AG04450 (cell line): ENCODE measurements at regions of chr12 and their contacts with region 1.

Region 1: DNA sequence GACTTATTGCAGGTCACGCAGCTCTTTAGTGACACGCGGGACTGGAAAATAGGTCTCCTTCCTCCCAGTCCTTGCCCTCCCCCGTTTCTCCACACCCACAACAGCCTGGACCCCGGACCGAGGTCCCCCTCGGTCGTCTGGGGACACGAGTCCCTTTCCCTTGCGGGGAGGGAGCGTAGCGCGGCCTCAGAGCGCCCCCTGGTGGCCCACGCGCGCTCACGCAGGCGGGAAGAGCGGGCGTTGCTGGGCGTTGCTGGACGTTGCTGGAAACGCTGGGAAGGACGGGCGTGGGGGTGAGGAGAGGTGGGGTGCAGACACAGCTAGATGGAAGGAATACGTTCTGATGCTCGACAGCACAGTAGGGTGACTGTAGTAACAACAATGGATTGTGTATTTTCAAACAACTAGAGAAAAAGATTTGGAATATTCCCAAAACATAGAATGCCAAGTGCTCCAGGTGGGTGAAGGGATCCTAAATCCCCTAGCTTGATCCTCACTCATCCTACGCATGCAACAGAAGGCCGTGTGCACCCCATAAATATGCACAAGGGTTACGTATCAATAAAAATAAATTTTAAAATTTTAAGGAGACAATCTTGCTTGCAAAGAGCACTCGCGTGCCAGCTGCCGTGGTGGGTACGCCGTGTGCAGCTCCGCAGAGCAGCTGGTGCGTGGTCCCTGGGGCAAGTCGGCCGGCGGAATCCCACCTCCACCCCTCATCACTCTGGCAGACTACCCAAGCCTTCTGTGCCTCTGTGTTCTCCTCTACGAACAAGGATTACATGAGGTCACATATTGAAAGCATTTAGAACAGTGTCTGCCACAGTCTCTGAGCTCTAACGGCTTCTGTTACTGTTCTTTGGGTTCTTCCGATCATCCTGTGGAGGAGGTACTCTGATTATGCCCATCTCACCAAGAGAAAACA is 87.4 kb downstream of the B4GALNT3 start:
- DNase-seq: no peak
- H3K4me3 ChIP-seq: no peak overlapping the region
- H3K27ac ChIP-seq: no peak overlapping the region
- H3K27me3 ChIP-seq: peaks cover 31% of the 10 kb centered on the region
- CTCF ChIP-seq: peak; percentile 98

Region 2: GRCh38 chr12:401235-402028 is 145.8 kb before region 1 on chr12 and contains the start of gene CCDC77:
- CTCF ChIA-PET with region 1: interaction called, 11 read pairs
- POLR2A ChIA-PET with region 1: no interaction called
- DNase-seq: peak; percentile 70
- H3K4me3 ChIP-seq: peak within 1 kb of the TSS; percentile 87
- H3K27ac ChIP-seq: peak within 1 kb of the TSS; percentile 57
- H3K27me3 ChIP-seq: no peaks in the 10 kb centered on the region
- CTCF ChIP-seq: peak; percentile 35
- polyA plus RNA-seq, gene CCDC77: 5.6 and 7.3 TPM in 2 replicates

Region 3: GRCh38 chr12:422526-422925 is 124.7 kb before region 1 on chr12:
- CTCF ChIA-PET with region 1: interaction called, 12 read pairs
- POLR2A ChIA-PET with region 1: no interaction called
- DNase-seq: no peak
- H3K4me3 ChIP-seq: no peak overlapping the region
- H3K27ac ChIP-seq: no peak overlapping the region
- H3K27me3 ChIP-seq: no peaks in the 10 kb centered on the region
- CTCF ChIP-seq: no peak

Region 4: GRCh38 chr12:442235-442884 is 104.8 kb before region 1 on chr12:
- CTCF ChIA-PET with region 1: interaction called, 175 read pairs
- POLR2A ChIA-PET with region 1: interaction called, 3 read pairs
- DNase-seq: peak; percentile 6
- H3K4me3 ChIP-seq: no peak overlapping the region
- H3K27ac ChIP-seq: no peak overlapping the region
- H3K27me3 ChIP-seq: peaks cover under 1% of the 10 kb centered on the region
- CTCF ChIP-seq: peak; percentile 80

Region 5: DNA sequence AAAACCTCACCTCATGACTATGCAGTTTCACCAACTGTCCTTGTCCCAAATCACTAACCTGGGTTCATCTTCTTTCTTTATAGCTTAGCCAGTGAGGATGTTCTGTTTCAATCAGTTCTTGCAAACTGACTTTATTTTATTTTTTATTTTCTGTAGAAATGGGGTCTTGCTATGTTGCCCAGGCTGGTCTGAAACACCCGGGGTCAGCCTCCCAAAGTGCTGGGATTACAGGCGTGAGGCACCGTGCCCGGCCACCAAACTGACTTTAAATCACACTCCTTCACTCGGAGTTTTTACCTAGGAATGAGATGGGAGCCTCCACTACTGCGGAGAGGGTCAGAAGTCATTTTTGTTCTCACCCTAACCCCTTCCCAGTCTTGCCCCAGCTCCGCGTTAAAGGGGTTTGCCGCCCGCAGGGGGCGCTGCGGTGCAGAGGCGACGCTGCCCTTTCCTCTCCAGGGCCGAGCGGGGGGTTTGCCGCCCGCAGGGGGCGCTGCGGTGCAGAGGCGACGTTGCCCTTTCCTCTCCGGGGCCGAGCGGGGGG is 94.4 kb before region 1 on chr12:
- CTCF ChIA-PET with region 1: interaction called, 21 read pairs
- POLR2A ChIA-PET with region 1: no interaction called
- DNase-seq: no peak
- H3K4me3 ChIP-seq: no peak overlapping the region
- H3K27ac ChIP-seq: no peak overlapping the region
- H3K27me3 ChIP-seq: peaks cover 37% of the 10 kb centered on the region
- CTCF ChIP-seq: peak; percentile 15; the same call in 1 of the 2 replicates

Region 6: GRCh38 chr12:905261-906031 is 358.3 kb after region 1 on chr12:
- CTCF ChIA-PET with region 1: no interaction called
- POLR2A ChIA-PET with region 1: no interaction called
- DNase-seq: no peak
- H3K4me3 ChIP-seq: no peak overlapping the region
- H3K27ac ChIP-seq: no peak overlapping the region
- H3K27me3 ChIP-seq: no peaks in the 10 kb centered on the region
- CTCF ChIP-seq: no peak